Heart left ventricle (tissue), 16 donors: ENCODE measurements at regions of chrX and their contacts with region 1.

Region 1: GRCh38 chrX:37685452-37686353 is at the start of gene XK:
- DNase-seq: peak; percentile 18 to 74 (median 52)
- ATAC-seq: peak; percentile 48 to 86 (median 72)
- H3K4me3 ChIP-seq: peak within 1 kb of the TSS in 11 of 12 donors; percentile 39 to 63 (median 56)
- H3K27ac ChIP-seq: peak within 1 kb of the TSS; percentile 51 to 89 (median 78)
- H3K4me1 ChIP-seq: peaks cover 0 to 3% (median 0%) of the 10 kb centered on the region in 12 donors
- H3K27me3 ChIP-seq: peaks cover 0 to 14% (median 0%) of the 10 kb centered on the region in 9 donors
- CTCF ChIP-seq: no peak
- POLR2A ChIP-seq: no peak
- total RNA-seq, gene XK: 5.0 to 16.4 (median 10.8) TPM

Region 2: DNA sequence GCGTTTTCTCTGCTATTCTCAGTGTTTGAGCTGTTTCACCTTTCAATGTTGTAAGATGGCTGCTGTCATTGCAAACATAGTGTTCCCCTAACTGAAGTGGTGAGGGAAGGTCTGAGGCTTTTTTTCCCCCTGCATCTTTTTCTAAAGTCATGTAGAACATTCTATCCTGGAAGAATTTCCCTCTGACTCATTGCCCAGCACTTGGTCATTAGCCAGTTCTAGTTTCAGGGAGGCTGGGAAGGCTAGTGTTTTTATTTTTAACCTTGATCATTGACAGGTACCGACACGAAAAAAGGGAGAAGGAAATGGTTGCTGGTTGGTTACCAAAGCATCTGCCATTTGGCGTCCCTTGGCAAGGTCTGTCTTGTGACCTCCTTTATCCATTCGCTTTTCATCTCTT is 107.7 kb before region 1 on chrX:
- intact Hi-C with region 1: loop called in 1 of 10 experiments (anchors 10 kb)
- DNase-seq: no peak
- ATAC-seq: peak in 2 of 4 donors; percentile 45 to 55
- H3K4me3 ChIP-seq: no peak overlapping the region
- H3K27ac ChIP-seq: peak overlapping the region in 1 of 12 donors; percentile 38
- H3K4me1 ChIP-seq: no peaks in the 10 kb centered on the region
- H3K27me3 ChIP-seq: no peaks in the 10 kb centered on the region
- CTCF ChIP-seq: no peak
- POLR2A ChIP-seq: no peak

Region 3: GRCh38 chrX:37603938-37604409 is 81.7 kb before region 1 on chrX:
- intact Hi-C with region 1: loop called in 1 of 10 experiments (anchors 10 kb)
- DNase-seq: peak in 4 of 5 donors; percentile 8 to 35 (median 28)
- ATAC-seq: peak; percentile 78 to 89 (median 84)
- H3K4me3 ChIP-seq: no peak overlapping the region
- H3K27ac ChIP-seq: peak overlapping the region in 4 of 12 donors; percentile 8 to 32 (median 25)
- H3K4me1 ChIP-seq: no peaks in the 10 kb centered on the region
- H3K27me3 ChIP-seq: peaks cover 0 to 16% (median 0%) of the 10 kb centered on the region in 9 donors
- CTCF ChIP-seq: no peak
- POLR2A ChIP-seq: no peak

Region 4: DNA sequence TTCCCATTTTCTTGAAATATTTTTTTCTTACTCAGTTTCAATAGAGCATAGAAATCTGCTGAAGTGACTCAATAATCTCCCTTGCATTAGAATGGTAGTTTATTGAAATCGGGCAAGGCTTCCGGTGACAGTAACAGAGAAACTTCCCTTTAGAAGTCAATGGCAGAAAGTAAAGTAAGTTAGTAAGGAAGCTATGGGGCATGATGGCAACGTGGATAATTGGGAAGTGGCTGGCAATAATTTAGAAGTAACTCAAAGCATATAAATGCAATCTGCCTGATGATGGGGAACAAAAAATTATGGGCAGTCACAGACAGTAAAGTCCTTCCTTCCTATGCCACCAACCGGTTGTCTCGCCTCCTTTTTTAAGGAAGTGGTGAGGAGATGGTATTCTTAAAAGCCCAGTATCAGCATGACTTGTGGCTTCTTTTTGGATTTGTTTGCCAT is 101.7 kb after region 1 on chrX:
- intact Hi-C with region 1: no loop called
- DNase-seq: no peak
- ATAC-seq: peak in 1 of 4 donors; percentile 24
- H3K4me3 ChIP-seq: no peak overlapping the region
- H3K27ac ChIP-seq: peak overlapping the region in 1 of 12 donors; percentile 76
- H3K4me1 ChIP-seq: peaks cover 0 to 19% (median 0%) of the 10 kb centered on the region in 12 donors
- H3K27me3 ChIP-seq: peaks cover 0 to 3% (median 0%) of the 10 kb centered on the region in 9 donors
- CTCF ChIP-seq: no peak
- POLR2A ChIP-seq: no peak